ENCODE measurements at regions of chr14 and their contacts with region 1.

Region 1: GRCh38 chr14:75383721-75384120 is 44.1 kb upstream of the JDP2 start:
- DNase-seq: no peak
- ATAC-seq: no peak
- H3K4me3 Mint-ChIP-seq: no peak overlapping the region
- H3K27ac Mint-ChIP-seq: no peak overlapping the region
- H3K4me1 Mint-ChIP-seq: peaks cover 20% of the 10 kb centered on the region
- H3K27me3 Mint-ChIP-seq: no peaks in the 10 kb centered on the region
- CTCF ChIP-seq: no peak

Region 2: DNA sequence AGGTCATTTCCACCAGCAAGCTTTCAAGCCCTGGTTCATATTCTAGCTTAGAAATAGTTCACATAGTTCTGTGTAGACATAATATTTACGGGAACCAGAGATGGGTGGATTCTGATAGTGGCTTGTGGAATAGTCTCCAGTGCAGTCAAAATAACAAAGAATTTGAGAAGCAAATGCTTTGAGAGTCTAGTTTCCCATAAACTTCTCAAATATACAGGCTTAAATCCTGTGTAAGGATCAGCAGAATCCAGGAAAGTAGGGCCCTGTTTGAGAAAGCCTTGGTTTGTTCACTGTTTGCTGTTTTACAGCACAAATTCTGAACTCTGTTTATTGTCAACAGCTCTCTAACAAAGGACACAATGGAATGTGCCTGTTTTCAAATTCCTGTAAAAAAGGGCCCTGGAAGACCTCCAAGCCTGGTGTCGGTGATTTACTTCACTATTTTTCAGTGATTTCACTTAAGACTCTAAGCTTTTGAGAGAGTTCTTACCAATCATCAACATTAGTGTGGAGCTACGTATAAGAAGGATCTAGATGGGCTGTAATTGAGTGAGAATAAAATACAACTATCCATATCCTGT is 116.5 kb before region 1 on chr14:
- CTCF ChIA-PET with region 1: no interaction called
- POLR2A ChIA-PET with region 1: interaction called, 12 read pairs
- DNase-seq: no peak
- ATAC-seq: peak; percentile 36
- H3K4me3 Mint-ChIP-seq: no peak overlapping the region
- H3K27ac Mint-ChIP-seq: peak overlapping the region; percentile 31
- H3K4me1 Mint-ChIP-seq: peaks cover 20% of the 10 kb centered on the region
- H3K27me3 Mint-ChIP-seq: no peaks in the 10 kb centered on the region
- CTCF ChIP-seq: no peak